MCF 10A (cell line): ENCODE measurements at regions of chr6 and their contacts with region 1.

Region 1: GRCh38 chr6:106181664-106182418 is 95.7 kb downstream of the PRDM1 start:
- DNase-seq: peak; percentile 57
- H3K4me3 Mint-ChIP-seq: no peak overlapping the region
- H3K27ac Mint-ChIP-seq: peak overlapping the region; percentile 66
- H3K4me1 Mint-ChIP-seq: peaks cover 16% of the 10 kb centered on the region
- H3K27me3 Mint-ChIP-seq: no peaks in the 10 kb centered on the region
- CTCF ChIP-seq: no peak

Region 2: DNA sequence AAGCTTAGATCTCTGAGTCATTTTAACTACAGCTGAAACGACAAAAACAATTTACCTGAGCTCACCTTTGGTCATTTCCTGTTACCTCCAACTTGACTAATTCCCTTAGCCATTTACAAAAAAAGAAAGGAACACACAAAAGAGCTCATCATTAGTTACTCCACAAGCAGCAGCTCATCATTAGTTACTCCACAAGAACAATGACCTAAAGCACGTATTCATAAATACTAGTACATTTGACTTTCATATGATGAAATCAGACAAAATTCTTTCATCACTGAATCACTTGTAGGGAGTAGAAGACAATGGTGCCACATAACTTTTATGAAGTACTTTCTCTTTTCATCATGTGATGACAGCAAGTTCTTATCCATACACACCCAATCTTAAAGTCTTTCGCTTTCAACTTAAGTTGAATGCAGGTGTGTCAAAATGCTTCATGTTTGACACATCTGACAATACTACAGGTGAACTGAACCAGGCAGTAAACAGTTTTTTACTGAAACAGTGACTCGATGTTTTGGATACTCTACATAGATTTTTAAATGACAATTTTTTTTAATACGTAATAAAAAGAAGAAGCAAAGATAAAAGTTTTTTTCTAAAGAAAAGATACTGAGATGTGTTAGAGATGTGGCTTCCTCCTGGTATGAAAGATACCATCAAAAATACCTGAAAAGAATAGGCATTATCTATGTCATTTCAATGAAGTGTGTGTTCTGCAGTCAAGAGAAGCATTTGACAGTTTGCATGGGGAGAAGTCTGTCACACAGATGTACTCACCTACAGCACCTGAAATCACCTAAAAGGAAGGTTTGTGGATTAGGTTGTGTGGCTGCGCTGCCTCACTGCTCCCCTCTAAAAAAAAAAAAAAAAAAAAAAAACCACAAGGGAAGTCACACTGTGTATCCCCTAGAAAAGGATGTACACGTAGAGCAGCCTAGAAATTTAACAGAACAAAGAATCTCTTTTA is 13.4 kb after region 1 on chr6:
- CTCF ChIA-PET with region 1: interaction called, 4 read pairs
- POLR2A ChIA-PET with region 1: interaction called, 28 read pairs
- intact Hi-C with region 1: no loop called
- DNase-seq: peak; percentile 79
- H3K4me3 Mint-ChIP-seq: peak overlapping the region; percentile 28
- H3K27ac Mint-ChIP-seq: peak overlapping the region; percentile 87
- H3K4me1 Mint-ChIP-seq: peaks cover 29% of the 10 kb centered on the region
- H3K27me3 Mint-ChIP-seq: no peaks in the 10 kb centered on the region
- CTCF ChIP-seq: no peak

Region 3: GRCh38 chr6:106309766-106310373 is 128.0 kb after region 1 on chr6:
- CTCF ChIA-PET with region 1: no interaction called
- POLR2A ChIA-PET with region 1: no interaction called
- intact Hi-C with region 1: no loop called
- DNase-seq: peak; percentile 50
- H3K4me3 Mint-ChIP-seq: no peak overlapping the region
- H3K27ac Mint-ChIP-seq: peak overlapping the region; percentile 90
- H3K4me1 Mint-ChIP-seq: peaks cover 43% of the 10 kb centered on the region
- H3K27me3 Mint-ChIP-seq: no peaks in the 10 kb centered on the region
- CTCF ChIP-seq: no peak